Right cardiac atrium (tissue), 5 donors: ENCODE measurements at regions of chr11 and their contacts with region 1.

Region 1: GRCh38 chr11:19951558-19952115 is 208.6 kb downstream of the DBX1 start:
- DNase-seq: no peak
- ATAC-seq: no peak
- H3K4me3 ChIP-seq: no peak overlapping the region
- H3K27ac ChIP-seq: no peak overlapping the region
- H3K4me1 ChIP-seq: peaks cover 4% of the 10 kb centered on the region
- H3K27me3 ChIP-seq: no peaks in the 10 kb centered on the region

Region 2: GRCh38 chr11:20056109-20056949 is 104.7 kb after region 1 on chr11:
- intact Hi-C with region 1: loop called in 1 of 4 experiments (anchors 10 kb)
- DNase-seq: peak in 2 of 3 donors; percentile 60 to 66
- ATAC-seq: peak in 1 of 2 donors; percentile 36
- H3K4me3 ChIP-seq: no peak overlapping the region
- H3K27ac ChIP-seq: peak overlapping the region; percentile 78
- H3K4me1 ChIP-seq: no peaks in the 10 kb centered on the region
- H3K27me3 ChIP-seq: no peaks in the 10 kb centered on the region

Region 3: GRCh38 chr11:20110908-20111669 is 159.5 kb after region 1 on chr11:
- intact Hi-C with region 1: loop called in 3 of 4 experiments (anchors 5 to 10 kb)
- DNase-seq: no peak
- ATAC-seq: peak; percentile 38 to 39
- H3K4me3 ChIP-seq: no peak overlapping the region
- H3K27ac ChIP-seq: no peak overlapping the region
- H3K4me1 ChIP-seq: peaks cover 8% of the 10 kb centered on the region
- H3K27me3 ChIP-seq: no peaks in the 10 kb centered on the region

Region 4: GRCh38 chr11:20127671-20128527 is 176.3 kb after region 1 on chr11:
- intact Hi-C with region 1: loop called in 3 of 4 experiments (anchors 2 to 5 kb)
- DNase-seq: peak; percentile 71 to 86 (median 86)
- ATAC-seq: peak; percentile 77 to 83
- H3K4me3 ChIP-seq: no peak overlapping the region
- H3K27ac ChIP-seq: no peak overlapping the region
- H3K4me1 ChIP-seq: no peaks in the 10 kb centered on the region
- H3K27me3 ChIP-seq: no peaks in the 10 kb centered on the region

Region 5: DNA sequence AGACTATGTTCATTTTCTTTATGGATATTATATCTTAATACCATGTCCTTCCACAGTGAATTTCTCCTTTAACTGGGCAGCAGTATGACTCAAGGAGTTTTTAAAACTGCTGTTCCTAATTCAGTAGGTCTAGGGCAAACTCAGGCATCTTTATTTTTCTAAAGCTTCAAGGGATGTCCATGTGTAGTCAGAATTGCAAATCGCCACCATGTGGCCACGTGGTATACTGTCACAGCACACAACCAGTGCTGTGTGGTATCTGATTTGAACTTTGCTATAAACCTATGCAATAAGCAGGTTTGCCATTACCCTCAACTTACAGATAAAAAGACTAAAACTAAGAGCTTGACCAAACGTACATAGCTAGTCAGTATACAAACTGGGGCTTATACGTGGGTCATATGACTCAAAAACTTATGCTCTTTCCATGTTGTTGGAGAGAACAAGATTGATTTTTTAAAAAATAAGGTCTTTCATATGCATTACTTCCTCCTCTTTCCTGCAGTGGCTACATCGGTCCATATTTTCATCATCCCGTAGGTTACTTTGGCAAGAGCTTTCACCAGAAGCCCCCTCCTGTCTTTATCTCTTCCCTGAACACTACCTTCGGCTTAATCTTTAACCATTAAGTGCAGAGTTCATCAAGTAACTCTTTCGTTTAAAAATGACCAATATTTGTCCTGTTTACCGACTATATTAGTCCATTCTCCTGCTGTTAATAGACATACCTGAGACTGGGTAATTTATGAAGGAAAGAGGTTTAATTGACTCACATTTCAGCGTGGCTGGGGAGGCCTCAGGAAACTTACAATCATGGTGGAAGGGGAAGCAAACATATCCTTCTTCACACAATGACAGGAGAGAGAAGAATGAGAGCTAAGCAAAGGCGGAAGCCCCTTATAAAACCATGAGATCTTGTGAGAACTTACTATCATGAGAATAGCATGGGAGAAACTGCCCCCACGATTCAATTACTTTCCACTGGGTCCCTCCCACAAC is 403.9 kb after region 1 on chr11:
- intact Hi-C with region 1: loop called in 1 of 4 experiments (anchors 10 kb)
- DNase-seq: no peak
- ATAC-seq: peak in 1 of 2 donors; percentile 66
- H3K4me3 ChIP-seq: no peak overlapping the region
- H3K27ac ChIP-seq: no peak overlapping the region
- H3K4me1 ChIP-seq: no peaks in the 10 kb centered on the region
- H3K27me3 ChIP-seq: no peaks in the 10 kb centered on the region